Panc1 (cell line): ENCODE measurements at regions of chr7 and their contacts with region 1.

Region 1: GRCh38 chr7:98643236-98643985 is 26.3 kb downstream of the NPTX2 start:
- DNase-seq: no peak
- ATAC-seq: peak; percentile 57
- H3K4me3 ChIP-seq: no peak overlapping the region
- H3K27ac ChIP-seq: no peak overlapping the region
- H3K4me1 ChIP-seq: no peaks in the 10 kb centered on the region
- H3K27me3 ChIP-seq: no peaks in the 10 kb centered on the region
- CTCF ChIP-seq: no peak

Region 2: GRCh38 chr7:98733036-98733435 is 89.6 kb after region 1 on chr7:
- CTCF ChIA-PET with region 1: interaction called, 11 read pairs
- POLR2A ChIA-PET with region 1: no interaction called
- in situ Hi-C with region 1: no loop called
- intact Hi-C with region 1: no loop called
- DNase-seq: peak; percentile 25
- ATAC-seq: peak; percentile 89
- H3K4me3 ChIP-seq: no peak overlapping the region
- H3K27ac ChIP-seq: no peak overlapping the region
- H3K4me1 ChIP-seq: 0 out of 2 replicates have a peak, but pooled peaks cover 2% of the 10 kb centered on the region
- H3K27me3 ChIP-seq: no peaks in the 10 kb centered on the region
- CTCF ChIP-seq: no peak; the same call in 1 of the 2 replicates